ENCODE measurements at regions of chr17 and their contacts with region 1.

Region 1: GRCh38 chr17:35119368-35120165 is at the start of gene RAD51D:
- DNase-seq: peak; percentile 85
- ATAC-seq: peak; percentile 93
- H3K4me3 Mint-ChIP-seq: peak within 1 kb of the TSS; percentile 79
- H3K27ac Mint-ChIP-seq: peak within 1 kb of the TSS; percentile 89
- H3K4me1 Mint-ChIP-seq: peaks cover 42% of the 10 kb centered on the region
- H3K27me3 Mint-ChIP-seq: no peaks in the 10 kb centered on the region
- total RNA-seq, gene RAD51D: 34.0 to 43.0 TPM

Region 2: GRCh38 chr17:34361478-34362061 is 758.0 kb before region 1 on chr17:
- CTCF ChIA-PET with region 1: interaction called, 13 read pairs
- DNase-seq: peak; percentile 91
- ATAC-seq: peak; percentile 92
- H3K4me3 Mint-ChIP-seq: no peak overlapping the region
- H3K27ac Mint-ChIP-seq: no peak overlapping the region
- H3K4me1 Mint-ChIP-seq: peaks cover 59% of the 10 kb centered on the region
- H3K27me3 Mint-ChIP-seq: peaks cover 51% of the 10 kb centered on the region

Region 3: DNA sequence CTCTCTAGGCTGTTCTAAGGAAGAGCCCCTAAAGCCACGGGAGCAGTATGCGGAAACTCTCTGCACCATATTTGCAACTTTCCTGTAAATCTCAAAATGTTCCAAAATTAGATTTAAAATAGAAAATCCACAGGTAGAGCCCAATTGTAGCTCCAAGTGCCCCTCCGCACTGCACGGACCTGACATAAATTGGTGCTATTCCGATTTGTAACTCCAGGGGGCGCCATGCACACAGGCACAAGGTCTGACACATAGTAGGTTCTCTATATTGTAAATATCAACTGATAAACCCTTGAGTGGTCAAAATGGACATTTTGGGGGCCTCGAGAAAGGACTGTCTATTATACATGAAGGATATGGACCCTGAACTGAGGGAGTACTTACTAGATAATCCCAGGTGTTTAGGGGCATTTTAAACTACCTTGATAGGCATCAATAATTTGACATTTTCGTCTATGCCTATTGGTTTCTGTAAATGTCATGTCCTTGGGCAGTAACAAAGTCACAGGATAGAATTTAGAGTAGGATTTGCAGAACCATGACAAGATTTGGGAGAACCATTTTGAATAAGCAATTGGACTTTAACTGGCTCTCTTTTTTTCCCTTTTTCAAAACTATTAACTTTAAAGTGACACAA is 576.7 kb before region 1 on chr17:
- CTCF ChIA-PET with region 1: interaction called, 56 read pairs
- DNase-seq: peak; percentile 55
- ATAC-seq: peak; percentile 30
- H3K4me3 Mint-ChIP-seq: no peak overlapping the region
- H3K27ac Mint-ChIP-seq: no peak overlapping the region
- H3K4me1 Mint-ChIP-seq: no peaks in the 10 kb centered on the region
- H3K27me3 Mint-ChIP-seq: peaks cover 54% of the 10 kb centered on the region

Region 4: GRCh38 chr17:34980681-34981537 is 138.7 kb before region 1 on chr17:
- CTCF ChIA-PET with region 1: interaction called, 27 read pairs
- DNase-seq: peak; percentile 88
- ATAC-seq: peak; percentile 92
- H3K4me3 Mint-ChIP-seq: peak overlapping the region; percentile 94
- H3K27ac Mint-ChIP-seq: peak overlapping the region; percentile 93
- H3K4me1 Mint-ChIP-seq: peaks cover 49% of the 10 kb centered on the region
- H3K27me3 Mint-ChIP-seq: no peaks in the 10 kb centered on the region

Region 5: GRCh38 chr17:34998205-34998604 is 121.4 kb before region 1 on chr17:
- CTCF ChIA-PET with region 1: interaction called, 109 read pairs
- DNase-seq: peak; percentile 87
- ATAC-seq: peak; percentile 98
- H3K4me3 Mint-ChIP-seq: no peak overlapping the region
- H3K27ac Mint-ChIP-seq: peak overlapping the region; percentile 52
- H3K4me1 Mint-ChIP-seq: peaks cover 13% of the 10 kb centered on the region
- H3K27me3 Mint-ChIP-seq: no peaks in the 10 kb centered on the region

Region 6: DNA sequence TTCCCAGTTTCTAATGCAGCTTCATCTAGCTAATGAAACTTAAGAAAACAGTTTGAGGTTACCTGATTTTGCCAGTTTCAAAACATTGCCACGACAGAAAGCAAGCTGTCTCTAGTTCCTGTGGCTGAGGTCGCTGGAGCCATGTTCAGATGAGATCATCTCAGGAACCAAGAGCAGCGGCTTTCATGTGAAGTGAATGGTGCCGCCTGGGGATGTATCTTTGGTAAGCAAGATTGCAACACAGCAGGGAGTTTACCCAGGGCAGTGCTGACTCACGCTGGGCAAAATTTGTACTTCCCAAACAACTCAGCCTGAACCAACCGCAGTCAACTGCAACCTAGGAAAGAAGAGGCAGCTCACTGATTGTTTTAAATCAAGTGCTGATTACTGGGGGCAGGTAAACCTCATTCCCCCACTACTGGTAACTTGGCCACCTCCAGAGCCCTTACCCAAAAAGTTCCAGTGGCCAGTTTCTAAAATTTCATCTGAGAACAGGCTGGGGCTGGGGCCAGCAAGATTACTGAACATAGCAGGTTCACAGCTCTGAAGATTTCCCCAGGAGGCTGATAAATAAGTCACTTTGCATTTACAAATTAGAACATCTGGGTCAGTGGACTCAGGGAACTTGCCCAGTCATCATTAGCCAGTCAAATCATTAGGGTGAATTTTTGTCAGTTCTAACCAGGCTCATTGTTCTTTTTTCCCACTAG is 55.9 kb before region 1 on chr17 and contains the start of gene RFFL:
- CTCF ChIA-PET with region 1: interaction called, 14 read pairs
- DNase-seq: peak; percentile 96
- ATAC-seq: peak; percentile 96
- H3K4me3 Mint-ChIP-seq: peak within 1 kb of the TSS; percentile 54
- H3K27ac Mint-ChIP-seq: peak within 1 kb of the TSS; percentile 91
- H3K4me1 Mint-ChIP-seq: peaks cover 62% of the 10 kb centered on the region
- H3K27me3 Mint-ChIP-seq: no peaks in the 10 kb centered on the region
- total RNA-seq, gene RFFL: 47.7 to 52.2 TPM

Region 7: GRCh38 chr17:35104844-35105450 is 14.6 kb before region 1 on chr17:
- CTCF ChIA-PET with region 1: interaction called, 16 read pairs
- DNase-seq: no peak
- ATAC-seq: no peak
- H3K4me3 Mint-ChIP-seq: no peak overlapping the region
- H3K27ac Mint-ChIP-seq: no peak overlapping the region
- H3K4me1 Mint-ChIP-seq: peaks cover 9% of the 10 kb centered on the region
- H3K27me3 Mint-ChIP-seq: no peaks in the 10 kb centered on the region

Measured in activated CD8-positive, alpha-beta memory T cell treated with anti-CD3 and anti-CD28 coated beads, Interleukin-2, amount 10 ng/mL, durations not matched to agents 7 days and 5 days (primary cell).